ENCODE measurements at regions of chr17 and their contacts with region 1.

Region 1: DNA sequence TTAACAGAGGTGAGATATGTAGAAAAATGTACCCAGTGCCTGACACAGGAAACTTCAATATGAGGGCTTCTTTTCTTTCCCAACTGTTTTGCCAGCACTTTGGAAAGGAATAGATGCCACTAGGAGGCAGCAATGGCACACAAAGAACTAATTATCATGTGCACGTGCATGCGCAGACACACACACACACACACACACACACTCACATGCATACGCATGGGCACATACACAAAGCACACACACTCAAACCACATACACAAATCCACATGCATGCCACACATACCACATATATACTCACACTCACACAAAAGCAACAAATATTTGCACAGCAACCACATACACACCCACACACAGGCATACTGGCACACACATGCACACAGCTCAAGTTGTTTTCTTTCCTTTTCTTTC is 8.8 kb upstream of the CEP112 start:
- DNase-seq: peak; percentile 77 to 89
- ATAC-seq: peak; percentile 75 to 81
- H3K4me3 ChIP-seq: no peak overlapping the region
- H3K27ac ChIP-seq: peak overlapping the region; percentile 8 to 14; a peak in 2 of 6 replicates
- H3K4me1 ChIP-seq: peaks cover 5% of the 10 kb centered on the region
- CTCF ChIP-seq: peak; percentile 98
- EP300 ChIP-seq: no peak
- POLR2A ChIP-seq: no peak
- RAD21 ChIP-seq: peak; percentile 99

Region 2: GRCh38 chr17:66115246-66115645 is 85.4 kb before region 1 on chr17:
- CTCF ChIA-PET with region 1: no interaction called
- POLR2A ChIA-PET with region 1: no interaction called
- DNase-seq: no peak
- ATAC-seq: no peak
- H3K4me3 ChIP-seq: no peak overlapping the region
- H3K27ac ChIP-seq: no peak overlapping the region
- H3K4me1 ChIP-seq: no peaks in the 10 kb centered on the region
- CTCF ChIP-seq: no peak
- EP300 ChIP-seq: no peak
- POLR2A ChIP-seq: no peak
- RAD21 ChIP-seq: no peak

Region 3: DNA sequence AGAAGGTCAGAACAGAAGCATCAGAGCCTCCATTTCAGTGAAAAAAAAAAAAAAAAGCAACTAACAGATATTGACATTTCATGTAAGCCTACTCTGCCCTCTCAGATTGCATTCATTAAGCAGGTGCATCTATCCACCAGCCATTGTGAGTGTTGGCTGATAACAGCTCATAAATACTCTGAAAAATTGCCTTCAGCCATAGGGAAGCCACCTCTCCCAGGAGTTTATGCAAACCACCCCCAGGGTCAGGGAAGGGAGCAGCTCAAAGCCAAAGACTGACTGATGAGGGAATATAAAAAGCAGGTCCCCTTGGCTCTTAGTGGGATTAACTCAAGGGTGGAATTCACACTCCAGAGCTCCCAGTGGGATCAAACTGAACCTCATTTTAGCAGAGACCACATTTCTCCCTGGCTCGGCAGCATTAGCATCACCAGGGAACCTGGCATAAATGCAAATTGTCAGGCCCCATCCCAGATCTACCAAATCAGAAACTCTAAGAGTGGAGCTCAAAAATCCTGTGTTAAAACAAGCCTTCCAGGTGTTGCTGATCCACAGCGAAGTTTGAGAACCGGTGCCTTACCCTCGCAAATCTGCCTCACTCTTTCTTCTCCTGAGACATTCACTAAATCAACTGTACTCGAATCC is 14.3 kb after region 1 on chr17:
- CTCF ChIA-PET with region 1: interaction called, 59 read pairs
- POLR2A ChIA-PET with region 1: no interaction called
- DNase-seq: no peak
- ATAC-seq: no peak
- H3K4me3 ChIP-seq: no peak overlapping the region
- H3K27ac ChIP-seq: no peak overlapping the region
- H3K4me1 ChIP-seq: no peaks in the 10 kb centered on the region
- CTCF ChIP-seq: no peak
- EP300 ChIP-seq: no peak
- POLR2A ChIP-seq: no peak
- RAD21 ChIP-seq: no peak

Region 4: DNA sequence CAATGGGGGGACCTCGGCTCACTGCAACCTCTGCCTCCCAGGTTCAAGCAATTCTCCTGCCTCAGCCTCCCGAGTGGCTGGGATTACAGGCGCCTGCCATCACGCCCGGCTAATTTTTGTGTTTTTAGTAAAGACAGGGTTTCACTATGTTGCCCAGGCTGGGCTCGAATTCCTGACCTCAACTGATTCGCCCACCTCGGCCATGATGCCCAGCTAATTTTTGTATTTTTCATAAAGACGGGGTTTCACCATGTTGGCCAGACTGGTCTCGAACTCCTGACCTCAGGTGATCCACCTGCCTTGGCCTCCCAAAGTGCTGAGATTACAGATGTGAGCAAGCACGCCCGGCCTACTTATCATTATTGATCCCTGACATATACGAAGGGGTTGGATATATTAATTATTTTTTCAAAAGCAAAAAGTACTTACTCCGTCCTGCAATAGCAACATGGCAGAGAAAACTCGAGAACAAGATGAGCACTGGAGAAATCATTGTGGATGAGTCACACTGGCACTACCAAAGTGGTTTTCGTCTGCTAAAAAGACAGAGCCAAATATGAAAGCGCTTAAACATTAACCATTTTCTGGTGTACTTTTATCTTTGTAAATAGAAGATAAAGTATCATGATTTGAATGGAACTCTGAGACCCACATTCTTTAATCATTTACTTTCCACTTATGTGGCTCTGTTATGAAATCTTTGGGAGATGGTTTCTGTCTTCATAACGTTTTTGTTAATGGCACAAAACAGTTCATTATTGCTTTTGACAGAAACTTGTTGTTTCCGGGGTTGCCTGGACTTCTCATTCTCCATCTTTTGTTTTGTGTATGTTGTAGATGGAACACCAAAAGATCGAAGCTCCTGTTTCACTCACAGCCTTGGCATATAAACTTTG is 28.4 kb after region 1 on chr17 and contains the start of gene APOH:
- CTCF ChIA-PET with region 1: interaction called, 20 read pairs
- POLR2A ChIA-PET with region 1: no interaction called
- DNase-seq: peak; percentile 59 to 85
- ATAC-seq: peak; percentile 60 to 83; a peak in 5 of 6 replicates
- H3K4me3 ChIP-seq: no peak within 1 kb of the TSS
- H3K27ac ChIP-seq: peak within 1 kb of the TSS; percentile 72 to 86
- H3K4me1 ChIP-seq: peaks cover 43% of the 10 kb centered on the region
- CTCF ChIP-seq: no peak
- EP300 ChIP-seq: peak in 1 of 2 experiments; percentile 27; a peak in 1 of 5 replicates
- POLR2A ChIP-seq: no peak
- RAD21 ChIP-seq: no peak; a peak in 1 of 5 replicates
- polyA plus RNA-seq, gene APOH: 26.1 and 39.6 TPM in 2 replicates

Region 5: GRCh38 chr17:66301797-66302741 is 101.4 kb after region 1 on chr17 and contains the start of gene PRKCA:
- CTCF ChIA-PET with region 1: interaction called, 18 read pairs
- POLR2A ChIA-PET with region 1: no interaction called
- DNase-seq: peak; percentile 73 to 83
- ATAC-seq: peak; percentile 58 to 84
- H3K4me3 ChIP-seq: peak within 1 kb of the TSS; percentile 85
- H3K27ac ChIP-seq: peak within 1 kb of the TSS; percentile 88 to 97
- H3K4me1 ChIP-seq: peaks cover 21% of the 10 kb centered on the region
- CTCF ChIP-seq: no peak
- EP300 ChIP-seq: no peak
- POLR2A ChIP-seq: peak; percentile 99
- RAD21 ChIP-seq: no peak; a peak in 1 of 5 replicates
- polyA plus RNA-seq, gene PRKCA: 65.0 and 79.7 TPM in 2 replicates

Region 6: GRCh38 chr17:66625311-66625775 is 424.7 kb after region 1 on chr17:
- CTCF ChIA-PET with region 1: interaction called, 18 read pairs
- POLR2A ChIA-PET with region 1: no interaction called
- DNase-seq: peak; percentile 67 to 85
- ATAC-seq: peak; percentile 87 to 94
- H3K4me3 ChIP-seq: no peak overlapping the region
- H3K27ac ChIP-seq: no peak overlapping the region
- H3K4me1 ChIP-seq: peaks cover 8% of the 10 kb centered on the region; the same call in 2 of the 3 replicates
- CTCF ChIP-seq: peak; percentile 91
- EP300 ChIP-seq: no peak
- POLR2A ChIP-seq: no peak
- RAD21 ChIP-seq: peak; percentile 90 to 94

Measured in A549 (cell line).